Heart right ventricle (tissue), 16 donors: ENCODE measurements at regions of chr12 and their contacts with region 1.

Region 1: GRCh38 chr12:95217377-95218149 is at the starts of genes FGD6 and VEZT:
- DNase-seq: peak; percentile 98 to 99
- ATAC-seq: peak; percentile 95 to 97 (median 97)
- H3K4me3 ChIP-seq: peak within 1 kb of the TSS; percentile 72 to 92 (median 86)
- H3K27ac ChIP-seq: peak within 1 kb of the TSS; percentile 92 to 98 (median 96)
- H3K4me1 ChIP-seq: peaks cover 0 to 72% (median 39%) of the 10 kb centered on the region in 9 donors
- H3K27me3 ChIP-seq: no peaks in the 10 kb centered on the region
- CTCF ChIP-seq: peak in 8 of 9 donors; percentile 57 to 86 (median 74)
- total RNA-seq, gene FGD6: 15.6 to 33.4 (median 22.6) TPM
- total RNA-seq, gene VEZT: 56.0 to 92.5 (median 75.0) TPM

Region 2: DNA sequence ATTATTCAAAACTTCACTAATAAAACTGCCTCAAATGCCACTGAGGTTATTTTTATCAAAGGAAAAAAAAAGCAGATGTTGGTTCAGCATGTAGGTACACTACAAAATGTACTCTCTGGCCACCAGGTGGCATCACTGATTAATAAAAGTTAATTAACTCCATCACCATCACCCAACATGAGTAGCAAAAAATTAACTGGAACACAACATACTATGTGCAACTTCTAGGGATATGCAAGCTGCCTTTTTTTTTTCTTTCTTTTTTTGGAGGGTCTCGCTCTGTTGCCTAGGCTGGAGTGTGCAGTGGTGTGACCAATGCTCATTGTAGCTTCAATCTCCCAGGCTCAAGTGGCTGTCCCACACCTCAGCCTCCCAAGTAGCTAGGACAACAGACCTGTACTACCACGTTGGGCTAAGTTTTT is 100.4 kb before region 1 on chr12:
- intact Hi-C with region 1: loop called in 9 of 10 experiments (anchors 1 to 10 kb)
- DNase-seq: peak in 1 of 2 donors; percentile 81
- ATAC-seq: peak; percentile 80 to 94 (median 92)
- H3K4me3 ChIP-seq: no peak overlapping the region
- H3K27ac ChIP-seq: peak overlapping the region in 2 of 10 donors; percentile 2 to 23
- H3K4me1 ChIP-seq: peaks cover 0 to 26% (median 19%) of the 10 kb centered on the region in 9 donors
- H3K27me3 ChIP-seq: no peaks in the 10 kb centered on the region
- CTCF ChIP-seq: peak; percentile 52 to 84 (median 74)

Region 3: DNA sequence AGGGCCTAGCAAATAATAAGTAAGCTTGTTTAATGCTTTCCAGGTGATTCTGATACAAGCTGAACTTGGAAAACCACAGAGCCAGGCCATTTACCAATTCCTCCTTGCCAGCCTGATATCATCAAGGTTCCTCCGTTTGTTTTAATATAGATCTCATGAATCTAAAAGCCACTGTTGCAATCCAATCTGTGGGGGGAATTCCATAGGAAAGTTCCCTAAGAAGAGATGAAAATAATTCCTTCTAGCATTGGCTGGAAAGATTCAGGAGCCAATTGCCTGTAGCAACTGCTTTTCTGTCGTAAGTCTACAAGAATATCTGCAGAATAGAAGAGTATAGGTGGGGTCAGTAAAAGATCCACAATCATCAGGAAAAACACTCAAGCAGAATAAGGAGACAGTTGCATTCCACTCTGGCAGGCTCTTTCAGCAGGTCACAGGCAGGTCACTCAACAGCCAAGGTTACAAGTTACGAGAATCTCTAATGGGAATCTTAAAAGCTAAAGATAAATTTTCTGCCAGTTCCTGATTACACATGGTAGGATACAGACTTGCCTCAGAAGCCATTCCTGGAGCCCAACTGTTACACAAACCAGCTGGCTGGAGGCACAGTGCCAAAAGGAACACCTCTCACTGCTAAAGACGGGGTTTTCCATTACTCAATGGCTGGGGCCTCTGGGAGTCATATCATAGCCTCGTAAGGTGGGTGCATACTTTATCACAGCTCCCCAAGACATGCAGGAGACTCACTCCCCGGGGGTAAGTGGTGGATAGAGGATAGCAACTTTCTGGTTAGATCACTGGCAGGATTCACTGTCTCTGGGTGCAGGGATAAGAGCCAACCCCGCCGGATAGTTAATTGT is 43.9 kb before region 1 on chr12:
- intact Hi-C with region 1: loop called in 1 of 10 experiments (anchors 5 kb)
- DNase-seq: peak; percentile 40 to 78
- ATAC-seq: peak; percentile 82 to 96 (median 92)
- H3K4me3 ChIP-seq: no peak overlapping the region
- H3K27ac ChIP-seq: peak overlapping the region in 8 of 10 donors; percentile 26 to 67 (median 48)
- H3K4me1 ChIP-seq: peaks cover 7 to 43% (median 26%) of the 10 kb centered on the region in 9 donors
- H3K27me3 ChIP-seq: no peaks in the 10 kb centered on the region
- CTCF ChIP-seq: no peak

Region 4: DNA sequence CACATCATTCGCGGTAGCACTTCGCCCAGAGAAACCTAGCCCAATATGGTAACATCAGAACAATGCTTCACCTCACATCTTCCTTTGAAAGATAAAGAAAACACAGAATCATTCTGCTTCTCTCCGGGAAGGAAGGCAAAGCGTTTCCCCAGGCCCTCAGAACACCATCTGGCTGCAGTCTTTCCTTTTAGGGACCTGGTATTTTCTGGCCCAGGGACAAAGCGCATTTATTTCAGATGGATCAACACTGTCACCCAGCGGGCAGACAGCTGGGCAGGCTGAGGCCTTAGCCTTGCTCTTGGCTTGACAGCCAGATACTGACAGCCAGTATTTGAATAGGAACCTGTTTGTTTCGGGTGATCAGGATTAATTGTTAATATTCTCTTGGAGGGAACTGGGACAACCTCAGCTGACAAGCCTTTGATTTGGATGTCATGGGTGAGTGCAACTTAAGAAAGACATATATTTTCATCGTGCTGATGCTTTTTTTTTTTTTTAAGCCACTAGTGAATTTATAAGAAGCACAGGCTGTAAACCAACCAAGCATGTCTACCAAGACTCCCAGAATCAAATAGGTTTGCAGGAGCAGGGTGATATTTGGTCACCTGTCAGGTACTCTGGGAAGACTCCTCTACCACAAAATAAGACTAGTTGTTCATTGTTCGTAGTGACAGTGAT is 119.0 kb after region 1 on chr12:
- intact Hi-C with region 1: loop called in 2 of 10 experiments (anchors 10 kb)
- DNase-seq: peak; percentile 33 to 76
- ATAC-seq: peak; percentile 87 to 94 (median 93)
- H3K4me3 ChIP-seq: peak overlapping the region in 5 of 10 donors; percentile 2 to 36 (median 21)
- H3K27ac ChIP-seq: peak overlapping the region in 9 of 10 donors; percentile 37 to 69 (median 54)
- H3K4me1 ChIP-seq: peaks cover 0 to 16% (median 9%) of the 10 kb centered on the region in 9 donors
- H3K27me3 ChIP-seq: no peaks in the 10 kb centered on the region
- CTCF ChIP-seq: peak; percentile 71 to 94 (median 89)

Region 5: GRCh38 chr12:95412482-95413311 is 195.1 kb after region 1 on chr12:
- intact Hi-C with region 1: no loop called
- DNase-seq: no peak
- ATAC-seq: no peak
- H3K4me3 ChIP-seq: no peak overlapping the region
- H3K27ac ChIP-seq: no peak overlapping the region
- H3K4me1 ChIP-seq: peaks cover 0 to 7% (median 0%) of the 10 kb centered on the region in 9 donors
- H3K27me3 ChIP-seq: no peaks in the 10 kb centered on the region
- CTCF ChIP-seq: no peak